CD4-positive, alpha-beta T cell (primary cell): ENCODE measurements at regions of chr11 and their contacts with region 1.

Region 1: GRCh38 chr11:114250993-114251814 is 45.0 kb upstream of the NNMT start:
- DNase-seq: no peak
- ATAC-seq: no peak
- H3K4me3 ChIP-seq: no peak overlapping the region
- H3K4me3 Mint-ChIP-seq: no peak overlapping the region
- H3K27ac ChIP-seq: no peak overlapping the region
- H3K27ac Mint-ChIP-seq: no peak overlapping the region
- H3K4me1 ChIP-seq: no peaks in the 10 kb centered on the region
- H3K4me1 Mint-ChIP-seq: no peaks in the 10 kb centered on the region
- H3K27me3 ChIP-seq: no peaks in the 10 kb centered on the region
- H3K27me3 Mint-ChIP-seq: no peaks in the 10 kb centered on the region
- CTCF ChIP-seq: no peak

Region 2: GRCh38 chr11:114208377-114208776 is 42.8 kb before region 1 on chr11:
- CTCF ChIA-PET with region 1: no interaction called
- POLR2A ChIA-PET with region 1: no interaction called
- intact Hi-C with region 1: loop called in 1 of 2 experiments (anchors 5 kb)
- DNase-seq: peak in 10 of 14 experiments; percentile 16 to 73 (median 24)
- ATAC-seq: peak; percentile 91
- H3K4me3 ChIP-seq: no peak overlapping the region
- H3K4me3 Mint-ChIP-seq: no peak overlapping the region
- H3K27ac ChIP-seq: no peak overlapping the region
- H3K27ac Mint-ChIP-seq: peak overlapping the region; percentile 14
- H3K4me1 ChIP-seq: peaks cover 23% of the 10 kb centered on the region
- H3K4me1 Mint-ChIP-seq: peaks cover 24% of the 10 kb centered on the region
- H3K27me3 ChIP-seq: no peaks in the 10 kb centered on the region
- H3K27me3 Mint-ChIP-seq: no peaks in the 10 kb centered on the region
- CTCF ChIP-seq: no peak